ENCODE measurements at regions of chr4 and their contacts with region 1.

Region 1: DNA sequence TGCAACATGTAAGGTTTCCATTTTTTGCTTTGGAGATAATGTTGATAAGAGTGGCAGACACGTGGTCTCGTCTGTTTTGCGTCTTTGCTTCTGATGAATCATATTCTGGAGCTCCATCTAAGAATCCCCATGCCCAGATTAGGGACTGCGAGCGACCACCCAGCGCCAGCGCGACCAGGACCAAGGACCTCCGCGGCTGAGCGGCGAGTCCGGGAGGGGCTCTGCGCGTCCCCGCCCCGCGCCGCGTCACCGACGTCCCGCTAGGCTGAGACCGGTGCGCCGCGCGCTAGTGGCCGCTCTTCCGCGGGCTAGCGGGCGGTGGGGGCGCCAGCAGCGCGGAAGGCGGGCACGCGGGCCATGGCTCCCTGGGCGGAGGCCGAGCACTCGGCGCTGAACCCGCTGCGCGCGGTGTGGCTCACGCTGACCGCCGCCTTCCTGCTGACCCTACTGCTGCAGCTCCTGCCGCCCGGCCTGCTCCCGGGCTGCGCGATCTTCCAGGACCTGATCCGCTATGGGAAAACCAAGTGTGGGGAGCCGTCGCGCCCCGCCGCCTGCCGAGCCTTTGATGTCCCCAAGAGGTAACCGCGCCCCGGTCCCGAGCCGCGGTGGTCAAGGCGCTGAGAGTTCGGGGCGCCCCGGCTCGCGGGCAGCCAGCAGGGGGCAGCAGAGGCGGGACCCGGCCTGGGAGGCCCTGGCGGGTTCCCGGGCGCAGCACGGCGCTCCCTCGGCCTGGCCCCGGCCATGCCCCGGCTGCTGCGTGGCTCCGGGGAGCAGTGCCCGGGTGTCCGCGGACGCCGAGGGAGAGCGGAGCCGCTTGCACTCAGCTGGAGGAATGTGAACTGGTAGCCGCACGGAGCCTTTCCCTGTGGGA is at the start of gene SRD5A3:
- DNase-seq: peak; percentile 84 to 91 (median 87)
- H3K4me3 ChIP-seq: peak within 1 kb of the TSS; percentile 17 to 86 (median 61)
- H3K27ac ChIP-seq: peak within 1 kb of the TSS; percentile 87 to 98 (median 97)
- H3K4me1 ChIP-seq: peaks cover 10 to 24% of the 10 kb centered on the region in 2 donors
- H3K27me3 ChIP-seq: no peaks in the 10 kb centered on the region
- CTCF ChIP-seq: peak; percentile 55 to 97 (median 88)
- POLR2A ChIP-seq: peak; percentile 13 to 61
- total RNA-seq, gene SRD5A3: 12.5 to 28.4 (median 17.2) TPM

Region 2: GRCh38 chr4:55154290-55154880 is 191.8 kb before region 1 on chr4:
- intact Hi-C with region 1: no loop called
- DNase-seq: no peak
- H3K4me3 ChIP-seq: no peak overlapping the region
- H3K27ac ChIP-seq: no peak overlapping the region
- H3K4me1 ChIP-seq: no peaks in the 10 kb centered on the region
- H3K27me3 ChIP-seq: peaks cover 6% of the 10 kb centered on the region
- CTCF ChIP-seq: no peak
- POLR2A ChIP-seq: no peak

Region 3: DNA sequence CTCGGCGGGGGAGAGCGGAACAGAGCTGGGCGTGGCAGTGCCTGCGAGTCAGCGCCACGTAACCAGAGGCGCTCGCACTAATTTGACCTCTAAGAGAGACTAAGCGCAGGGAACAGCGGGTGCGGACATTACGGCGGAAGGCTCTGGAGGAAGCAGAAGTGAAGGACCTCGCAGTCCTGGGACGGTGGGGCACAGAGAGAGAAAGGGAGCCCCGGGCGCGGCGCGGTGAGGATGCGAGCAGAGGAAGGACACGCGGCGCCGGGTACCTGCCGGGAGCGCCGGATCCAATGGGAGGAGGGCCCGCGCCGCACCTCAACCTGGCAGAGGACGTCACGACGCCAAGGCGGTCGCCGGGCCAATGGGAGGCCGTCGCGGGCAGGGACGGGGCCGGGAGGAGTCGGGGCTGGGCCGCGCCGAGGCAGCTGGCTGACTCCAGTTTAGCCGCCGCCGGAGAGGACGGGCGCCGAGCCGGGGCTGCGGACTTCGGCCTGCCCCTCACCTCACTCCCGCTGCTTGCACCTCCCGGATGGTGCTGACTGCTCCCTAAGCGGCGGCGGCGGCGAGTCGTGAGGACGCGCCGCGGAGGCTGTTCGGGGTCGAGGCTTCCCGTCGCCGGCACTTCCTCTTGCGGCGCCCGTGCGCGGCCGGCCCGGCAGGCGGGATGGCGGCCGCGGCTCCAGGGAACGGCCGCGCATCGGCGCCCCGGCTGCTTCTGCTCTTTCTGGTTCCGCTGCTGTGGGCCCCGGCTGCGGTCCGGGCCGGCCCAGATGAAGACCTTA is 49.5 kb after region 1 on chr4 and contains the start of gene TMEM165:
- intact Hi-C with region 1: loop called in 1 of 2 experiments (anchors 5 kb)
- DNase-seq: peak; percentile 92 to 96 (median 94)
- H3K4me3 ChIP-seq: peak within 1 kb of the TSS; percentile 54 to 99 (median 78)
- H3K27ac ChIP-seq: peak within 1 kb of the TSS; percentile 96 to 99 (median 99)
- H3K4me1 ChIP-seq: peaks cover 25 to 27% of the 10 kb centered on the region in 2 donors
- H3K27me3 ChIP-seq: no peaks in the 10 kb centered on the region
- CTCF ChIP-seq: peak in 1 of 6 experiments; percentile 29
- POLR2A ChIP-seq: peak; percentile 96 to 99
- total RNA-seq, gene TMEM165: 88.5 to 290 (median 202) TPM

Region 4: GRCh38 chr4:55435141-55435841 is 89.1 kb after region 1 on chr4:
- intact Hi-C with region 1: loop called in 1 of 2 experiments (anchors 10 kb)
- DNase-seq: no peak
- H3K4me3 ChIP-seq: no peak overlapping the region
- H3K27ac ChIP-seq: peak overlapping the region in 2 of 5 donors; percentile 5 to 6
- H3K4me1 ChIP-seq: peaks cover 0 to 22% of the 10 kb centered on the region in 2 donors
- H3K27me3 ChIP-seq: no peaks in the 10 kb centered on the region
- CTCF ChIP-seq: peak in 3 of 6 experiments; percentile 12 to 23 (median 12)
- POLR2A ChIP-seq: no peak

Measured in adrenal gland (tissue), 19 donors.